GM12878 (cell line): ENCODE measurements at regions of chr2 and their contacts with region 1.

Region 1: DNA sequence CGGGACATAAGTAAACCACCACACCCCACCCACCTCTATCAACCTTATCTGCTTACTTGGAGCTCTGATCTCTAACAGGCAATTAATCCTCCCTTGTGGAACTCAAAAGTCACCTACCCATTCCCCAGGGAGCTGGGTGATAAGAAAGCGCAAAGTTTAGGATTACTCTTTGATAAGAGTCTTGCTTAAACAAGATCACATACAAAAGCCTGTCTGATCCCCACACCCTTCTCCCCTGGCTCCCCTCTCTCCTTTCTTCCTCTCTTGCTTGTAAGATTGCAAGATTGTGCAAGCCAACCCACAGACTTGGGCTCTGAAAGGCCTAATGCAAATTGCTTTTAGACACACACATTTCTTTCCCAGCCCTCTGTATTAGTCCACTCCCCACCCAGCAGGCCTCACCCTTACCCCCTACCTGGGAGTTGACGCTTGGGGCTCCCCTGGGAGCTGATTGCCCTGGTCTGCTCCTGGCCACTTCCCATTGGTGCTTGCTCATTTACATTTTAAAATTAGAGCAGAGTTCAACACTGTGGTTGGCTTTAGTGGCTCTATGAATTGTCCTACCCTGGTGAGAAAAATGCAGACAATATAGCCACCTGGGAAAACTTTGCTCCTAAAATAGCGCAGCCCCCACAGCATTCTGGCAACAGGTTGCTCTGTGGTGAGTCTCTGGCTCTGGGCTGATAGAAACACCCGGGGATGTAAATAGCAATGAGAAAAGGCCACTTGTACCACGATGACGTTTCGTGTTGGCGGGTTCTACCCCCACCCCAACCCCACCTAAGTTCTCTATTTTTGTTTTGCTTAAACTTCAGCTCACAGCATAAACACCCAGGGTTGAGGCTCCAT is 92.8 kb upstream of the MSH2 start:
- DNase-seq: peak; percentile 100
- ATAC-seq: peak; percentile 87
- H3K4me3 ChIP-seq: peak overlapping the region; percentile 31; the same call in 1 of the 2 replicates
- H3K27ac ChIP-seq: peak overlapping the region; percentile 88
- H3K4me1 ChIP-seq: peaks cover 44% of the 10 kb centered on the region
- H3K27me3 ChIP-seq: no peaks in the 10 kb centered on the region
- CTCF ChIP-seq: no peak
- EP300 ChIP-seq: peak; percentile 90 to 97
- POLR2A ChIP-seq: peak; percentile 50; the same call in 1 of the 2 replicates
- RAD21 ChIP-seq: peak; percentile 26; the same call in 1 of the 2 replicates

Region 2: GRCh38 chr2:46942139-46942517 is 368.0 kb before region 1 on chr2:
- CTCF ChIA-PET with region 1: interaction called, 4 read pairs
- POLR2A ChIA-PET with region 1: interaction called, 8 read pairs
- RAD21 ChIA-PET with region 1: interaction called, 5 read pairs
- SMC1A ChIA-PET with region 1: interaction called, 3 read pairs
- in situ Hi-C with region 1: no loop called
- intact Hi-C with region 1: loop called (anchors 2 kb)
- DNase-seq: no peak
- ATAC-seq: peak; percentile 71
- H3K4me3 ChIP-seq: peak overlapping the region; percentile 83
- H3K27ac ChIP-seq: peak overlapping the region; percentile 93
- H3K4me1 ChIP-seq: peaks cover 24% of the 10 kb centered on the region
- H3K27me3 ChIP-seq: no peaks in the 10 kb centered on the region
- CTCF ChIP-seq: no peak
- EP300 ChIP-seq: no peak
- POLR2A ChIP-seq: 0 out of 2 replicates have a peak, but pooled peaks have one; percentile 18
- RAD21 ChIP-seq: no peak

Region 3: GRCh38 chr2:47174733-47175361 is 135.3 kb before region 1 on chr2:
- CTCF ChIA-PET with region 1: interaction called, 8 read pairs
- POLR2A ChIA-PET with region 1: interaction called, 11 read pairs
- RAD21 ChIA-PET with region 1: interaction called, 21 read pairs
- SMC1A ChIA-PET with region 1: interaction called, 23 read pairs
- in situ Hi-C with region 1: no loop called
- intact Hi-C with region 1: no loop called
- DNase-seq: no peak
- ATAC-seq: peak; percentile 37
- H3K4me3 ChIP-seq: peak overlapping the region; percentile 98
- H3K27ac ChIP-seq: peak overlapping the region; percentile 100
- H3K4me1 ChIP-seq: peaks cover 7% of the 10 kb centered on the region
- H3K27me3 ChIP-seq: no peaks in the 10 kb centered on the region
- CTCF ChIP-seq: no peak
- EP300 ChIP-seq: no peak
- POLR2A ChIP-seq: no peak
- RAD21 ChIP-seq: no peak

Region 4: DNA sequence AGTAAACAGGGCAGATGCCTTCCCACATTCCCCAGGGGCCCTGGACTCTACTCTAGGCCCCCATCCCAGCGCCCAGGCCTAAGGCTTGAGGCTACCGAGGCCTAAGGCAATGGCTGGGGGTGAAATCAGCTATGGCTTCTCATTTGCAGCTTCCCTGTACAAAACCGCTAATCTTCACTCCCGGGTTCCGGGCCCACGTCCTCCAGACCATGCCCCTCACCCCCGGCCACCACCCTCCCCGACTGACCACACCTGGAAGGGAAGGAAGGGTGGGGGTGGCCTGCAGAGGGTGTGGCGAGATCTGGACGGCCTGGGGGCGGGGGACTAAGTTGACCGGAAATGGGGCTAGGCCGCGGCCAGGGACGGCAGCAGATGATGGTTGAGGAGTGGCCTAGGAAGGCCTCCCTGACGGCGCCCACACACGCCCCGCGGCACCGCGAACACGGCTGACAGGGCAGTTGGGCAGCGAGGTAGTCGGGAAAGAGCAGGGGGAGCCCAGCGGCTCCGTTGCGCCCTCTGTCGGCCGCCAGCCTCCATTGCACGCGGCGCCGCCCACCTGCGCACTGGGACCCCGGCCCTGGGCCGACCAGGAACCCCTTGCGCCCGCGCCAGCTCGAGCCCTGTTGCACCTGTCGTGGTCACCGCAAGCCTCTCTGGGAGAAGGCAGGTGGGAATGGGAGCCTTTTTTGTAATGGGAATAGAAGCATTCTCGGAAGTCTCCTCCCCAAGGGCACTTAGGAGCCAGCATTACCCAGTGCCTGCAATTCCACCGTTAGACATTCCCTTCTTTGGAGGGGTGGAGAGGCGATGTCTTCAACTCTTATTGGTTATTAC is 37.9 kb before region 1 on chr2:
- CTCF ChIA-PET with region 1: interaction called, 63 read pairs
- POLR2A ChIA-PET with region 1: interaction called, 25 read pairs
- RAD21 ChIA-PET with region 1: interaction called, 8 read pairs
- SMC1A ChIA-PET with region 1: interaction called, 134 read pairs
- in situ Hi-C with region 1: no loop called
- intact Hi-C with region 1: loop called (anchors 2 kb)
- DNase-seq: no peak
- ATAC-seq: peak; percentile 97
- H3K4me3 ChIP-seq: peak overlapping the region; percentile 71
- H3K27ac ChIP-seq: peak overlapping the region; percentile 20; the same call in 1 of the 2 replicates
- H3K4me1 ChIP-seq: peaks cover 18% of the 10 kb centered on the region
- H3K27me3 ChIP-seq: no peaks in the 10 kb centered on the region
- CTCF ChIP-seq: peak; percentile 84 to 98 (median 92)
- EP300 ChIP-seq: no peak
- POLR2A ChIP-seq: peak; percentile 74
- RAD21 ChIP-seq: peak; percentile 52

Region 5: DNA sequence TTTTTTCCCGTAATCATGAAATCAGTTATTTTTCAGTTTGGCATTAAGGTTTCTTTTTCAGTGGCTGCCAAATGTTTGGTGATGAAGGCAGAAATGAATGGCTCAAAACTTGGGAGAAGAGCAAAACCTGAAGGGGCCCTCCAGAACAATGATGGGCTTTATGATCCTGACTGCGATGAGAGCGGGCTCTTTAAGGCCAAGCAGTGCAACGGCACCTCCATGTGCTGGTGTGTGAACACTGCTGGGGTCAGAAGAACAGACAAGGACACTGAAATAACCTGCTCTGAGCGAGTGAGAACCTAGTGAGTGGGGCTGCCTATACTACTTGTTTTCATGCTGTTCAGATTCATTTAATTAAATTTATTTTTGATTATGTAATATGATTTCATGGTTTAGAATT is 63.6 kb after region 1 on chr2:
- CTCF ChIA-PET with region 1: no interaction called
- POLR2A ChIA-PET with region 1: no interaction called
- RAD21 ChIA-PET with region 1: no interaction called
- SMC1A ChIA-PET with region 1: no interaction called
- in situ Hi-C with region 1: no loop called
- intact Hi-C with region 1: no loop called
- DNase-seq: no peak
- ATAC-seq: peak; percentile 19; the same call in 1 of the 3 replicates
- H3K4me3 ChIP-seq: no peak overlapping the region
- H3K27ac ChIP-seq: no peak overlapping the region
- H3K4me1 ChIP-seq: no peaks in the 10 kb centered on the region
- H3K27me3 ChIP-seq: peaks cover 0 to 3% of the 10 kb centered on the region in 2 experiments; a peak in 2 of 4 replicates
- CTCF ChIP-seq: no peak
- EP300 ChIP-seq: no peak
- POLR2A ChIP-seq: no peak
- RAD21 ChIP-seq: no peak

Region 6: GRCh38 chr2:47386551-47386950 is 76.4 kb after region 1 on chr2:
- CTCF ChIA-PET with region 1: no interaction called
- POLR2A ChIA-PET with region 1: no interaction called
- RAD21 ChIA-PET with region 1: interaction called, 12 read pairs
- SMC1A ChIA-PET with region 1: interaction called, 5 read pairs
- in situ Hi-C with region 1: no loop called
- intact Hi-C with region 1: no loop called
- DNase-seq: no peak
- ATAC-seq: peak; percentile 61
- H3K4me3 ChIP-seq: no peak overlapping the region
- H3K27ac ChIP-seq: no peak overlapping the region
- H3K4me1 ChIP-seq: peaks cover 3% of the 10 kb centered on the region; the same call in 1 of the 2 replicates
- H3K27me3 ChIP-seq: peaks cover 0 to 3% of the 10 kb centered on the region in 2 experiments; a peak in 1 of 4 replicates
- CTCF ChIP-seq: no peak
- EP300 ChIP-seq: no peak
- POLR2A ChIP-seq: no peak
- RAD21 ChIP-seq: no peak